ENCODE measurements at regions of chr1 and their contacts with region 1.

Region 1: DNA sequence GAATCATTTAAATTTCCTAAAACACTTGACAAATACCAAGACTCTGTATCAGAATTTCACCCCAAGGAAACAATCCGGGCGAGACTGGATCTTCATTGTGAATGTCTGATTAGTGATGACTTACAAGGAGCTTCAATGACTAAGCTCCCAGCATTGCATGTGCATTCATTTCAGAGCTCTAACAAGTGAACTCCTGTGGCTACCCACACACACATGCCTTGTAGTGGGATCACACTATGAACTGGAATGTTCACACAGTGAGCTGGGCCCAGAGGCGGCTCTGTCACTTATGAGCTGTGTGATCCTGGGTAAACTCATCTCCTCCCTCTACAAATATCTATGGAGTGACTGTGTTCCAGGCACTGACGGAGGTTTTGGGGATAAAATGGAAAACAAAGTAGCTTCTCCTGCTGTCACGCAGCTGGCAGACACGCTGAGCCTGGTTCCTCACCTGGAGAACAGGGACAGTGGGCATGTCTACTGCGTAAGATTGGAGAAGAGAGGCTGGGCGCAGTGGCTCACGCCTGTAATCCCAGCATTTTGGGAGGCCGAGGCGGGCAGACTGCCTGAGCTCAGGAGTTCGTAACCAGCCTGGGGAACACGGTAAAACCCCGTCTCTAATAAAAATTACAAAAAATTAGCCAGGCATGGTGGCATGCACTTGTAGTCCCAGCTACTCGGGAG is 56.9 kb downstream of the CLSTN1 start:
- DNase-seq: peak; percentile 71 to 95
- H3K4me3 ChIP-seq: no peak overlapping the region
- H3K27ac ChIP-seq: peak overlapping the region; percentile 83
- H3K4me1 ChIP-seq: peaks cover 15% of the 10 kb centered on the region
- H3K27me3 ChIP-seq: no peaks in the 10 kb centered on the region
- CTCF ChIP-seq: no peak

Region 2: GRCh38 chr1:9555942-9556341 is 211.0 kb before region 1 on chr1:
- CTCF ChIA-PET with region 1: no interaction called
- POLR2A ChIA-PET with region 1: no interaction called
- intact Hi-C with region 1: no loop called
- DNase-seq: no peak
- H3K4me3 ChIP-seq: no peak overlapping the region
- H3K27ac ChIP-seq: peak overlapping the region; percentile 38; the same call in 1 of the 2 replicates
- H3K4me1 ChIP-seq: peaks cover 17% of the 10 kb centered on the region
- H3K27me3 ChIP-seq: no peaks in the 10 kb centered on the region
- CTCF ChIP-seq: no peak

Region 3: GRCh38 chr1:9881838-9882249 is 114.9 kb after region 1 on chr1:
- CTCF ChIA-PET with region 1: no interaction called
- POLR2A ChIA-PET with region 1: no interaction called
- intact Hi-C with region 1: no loop called
- DNase-seq: peak; percentile 55 to 72
- H3K4me3 ChIP-seq: no peak overlapping the region
- H3K27ac ChIP-seq: peak overlapping the region; percentile 35
- H3K4me1 ChIP-seq: peaks cover 32% of the 10 kb centered on the region
- H3K27me3 ChIP-seq: no peaks in the 10 kb centered on the region
- CTCF ChIP-seq: no peak

Region 4: GRCh38 chr1:9910425-9911178 is 143.7 kb after region 1 on chr1:
- CTCF ChIA-PET with region 1: no interaction called
- POLR2A ChIA-PET with region 1: no interaction called
- intact Hi-C with region 1: loop called (anchors 10 kb)
- DNase-seq: peak; percentile 89 to 100
- H3K4me3 ChIP-seq: peak overlapping the region; percentile 58
- H3K27ac ChIP-seq: peak overlapping the region; percentile 64
- H3K4me1 ChIP-seq: peaks cover 12% of the 10 kb centered on the region
- H3K27me3 ChIP-seq: no peaks in the 10 kb centered on the region
- CTCF ChIP-seq: no peak